Naive thymus-derived CD4-positive, alpha-beta T cell (primary cell): ENCODE measurements at regions of chr7 and their contacts with region 1.

Region 1: GRCh38 chr7:112571852-112572607 is 91.2 kb downstream of the LSMEM1 start:
- DNase-seq: no peak
- ATAC-seq: no peak
- H3K4me3 ChIP-seq: no peak overlapping the region
- H3K4me3 Mint-ChIP-seq: no peak overlapping the region
- H3K27ac ChIP-seq: no peak overlapping the region
- H3K27ac Mint-ChIP-seq: no peak overlapping the region
- H3K4me1 ChIP-seq: no peaks in the 10 kb centered on the region
- H3K4me1 Mint-ChIP-seq: peaks cover 0 to 19% (median 15%) of the 10 kb centered on the region in 7 donors
- H3K27me3 ChIP-seq: no peaks in the 10 kb centered on the region
- H3K27me3 Mint-ChIP-seq: peaks cover 0 to 11% (median 4%) of the 10 kb centered on the region in 5 donors

Region 2: GRCh38 chr7:111835066-111835465 is 737.0 kb before region 1 on chr7:
- CTCF ChIA-PET with region 1: no interaction called
- POLR2A ChIA-PET with region 1: no interaction called
- intact Hi-C with region 1: no loop called
- DNase-seq: no peak
- ATAC-seq: no peak
- H3K4me3 ChIP-seq: no peak overlapping the region
- H3K4me3 Mint-ChIP-seq: no peak overlapping the region
- H3K27ac ChIP-seq: no peak overlapping the region
- H3K27ac Mint-ChIP-seq: no peak overlapping the region
- H3K4me1 ChIP-seq: no peaks in the 10 kb centered on the region
- H3K4me1 Mint-ChIP-seq: no peaks in the 10 kb centered on the region
- H3K27me3 ChIP-seq: no peaks in the 10 kb centered on the region
- H3K27me3 Mint-ChIP-seq: peaks cover 0 to 15% (median 9%) of the 10 kb centered on the region in 5 donors

Region 3: DNA sequence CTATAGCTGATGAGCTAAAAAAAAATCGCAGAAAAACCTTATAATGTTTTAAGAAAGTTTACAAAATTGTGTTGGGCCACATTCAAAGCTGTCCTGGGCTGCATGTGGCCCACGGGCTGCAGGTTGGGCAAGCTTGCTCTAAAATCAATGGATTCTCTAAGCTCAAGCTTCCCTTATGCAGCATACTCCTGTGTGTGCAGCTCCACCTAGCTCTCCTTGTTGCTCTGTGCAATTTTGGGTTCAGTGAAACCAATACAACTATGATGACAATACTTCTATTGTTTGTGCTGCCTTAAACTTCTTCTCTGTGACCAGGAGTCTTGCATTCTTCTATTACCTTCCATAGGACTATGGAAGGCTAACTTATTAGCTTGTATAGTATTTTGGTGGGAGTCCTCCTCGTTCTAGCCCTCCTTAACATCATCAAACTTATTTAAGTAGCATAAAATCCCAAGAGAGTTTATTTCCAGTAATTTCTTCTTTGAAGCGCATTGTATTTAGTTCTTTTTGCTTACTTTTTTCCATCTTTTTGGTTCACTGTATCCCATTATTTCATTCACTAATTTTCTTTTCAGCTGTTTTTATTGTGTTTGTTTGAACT is 717.2 kb after region 1 on chr7:
- CTCF ChIA-PET with region 1: no interaction called
- POLR2A ChIA-PET with region 1: no interaction called
- intact Hi-C with region 1: loop called in 1 of 2 experiments (anchors 10 kb)
- DNase-seq: no peak
- ATAC-seq: no peak
- H3K4me3 ChIP-seq: no peak overlapping the region
- H3K4me3 Mint-ChIP-seq: no peak overlapping the region
- H3K27ac ChIP-seq: no peak overlapping the region
- H3K27ac Mint-ChIP-seq: no peak overlapping the region
- H3K4me1 ChIP-seq: no peaks in the 10 kb centered on the region
- H3K4me1 Mint-ChIP-seq: no peaks in the 10 kb centered on the region
- H3K27me3 ChIP-seq: no peaks in the 10 kb centered on the region
- H3K27me3 Mint-ChIP-seq: peaks cover 0 to 14% (median 0%) of the 10 kb centered on the region in 5 donors